ENCODE measurements at regions of chr12 and their contacts with region 1.

Region 1: DNA sequence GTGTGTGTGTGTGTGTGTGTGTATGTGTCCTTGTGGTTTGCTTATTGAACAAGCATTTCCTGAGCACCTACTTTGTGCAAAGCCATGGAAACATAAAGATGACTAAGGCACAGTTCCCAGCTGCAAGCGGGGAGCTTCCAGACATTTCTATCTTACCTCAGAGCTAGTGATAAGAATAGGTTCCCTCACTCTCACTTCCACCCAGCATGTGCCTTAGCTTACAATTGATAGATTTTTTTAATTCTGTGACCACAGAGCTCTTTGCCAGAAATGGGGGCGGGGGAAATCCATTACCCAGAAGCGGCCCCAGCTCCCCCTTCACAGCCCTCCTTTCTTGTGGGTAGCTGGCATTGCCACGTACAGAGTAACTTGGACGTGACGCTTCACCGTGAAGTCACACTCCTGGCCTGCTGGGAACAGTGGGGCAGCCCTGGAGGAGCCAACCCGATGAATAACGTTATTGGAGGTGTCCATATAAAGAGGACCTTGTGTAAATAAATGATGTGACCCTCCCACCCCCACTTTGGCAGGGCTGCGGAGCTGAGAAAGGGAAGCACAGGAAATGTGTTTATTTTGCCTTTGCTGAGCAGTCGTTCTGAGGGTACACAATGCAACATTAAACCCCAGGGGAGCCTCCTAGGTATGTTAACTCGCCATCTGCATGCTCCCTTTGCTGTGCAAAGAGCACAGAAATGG is 238.9 kb downstream of the CHST11 start:
- DNase-seq: peak; percentile 94
- H3K4me3 Mint-ChIP-seq: peak overlapping the region; percentile 16
- H3K27ac Mint-ChIP-seq: peak overlapping the region; percentile 92
- H3K4me1 Mint-ChIP-seq: peaks cover 74% of the 10 kb centered on the region
- H3K27me3 Mint-ChIP-seq: no peaks in the 10 kb centered on the region

Region 2: DNA sequence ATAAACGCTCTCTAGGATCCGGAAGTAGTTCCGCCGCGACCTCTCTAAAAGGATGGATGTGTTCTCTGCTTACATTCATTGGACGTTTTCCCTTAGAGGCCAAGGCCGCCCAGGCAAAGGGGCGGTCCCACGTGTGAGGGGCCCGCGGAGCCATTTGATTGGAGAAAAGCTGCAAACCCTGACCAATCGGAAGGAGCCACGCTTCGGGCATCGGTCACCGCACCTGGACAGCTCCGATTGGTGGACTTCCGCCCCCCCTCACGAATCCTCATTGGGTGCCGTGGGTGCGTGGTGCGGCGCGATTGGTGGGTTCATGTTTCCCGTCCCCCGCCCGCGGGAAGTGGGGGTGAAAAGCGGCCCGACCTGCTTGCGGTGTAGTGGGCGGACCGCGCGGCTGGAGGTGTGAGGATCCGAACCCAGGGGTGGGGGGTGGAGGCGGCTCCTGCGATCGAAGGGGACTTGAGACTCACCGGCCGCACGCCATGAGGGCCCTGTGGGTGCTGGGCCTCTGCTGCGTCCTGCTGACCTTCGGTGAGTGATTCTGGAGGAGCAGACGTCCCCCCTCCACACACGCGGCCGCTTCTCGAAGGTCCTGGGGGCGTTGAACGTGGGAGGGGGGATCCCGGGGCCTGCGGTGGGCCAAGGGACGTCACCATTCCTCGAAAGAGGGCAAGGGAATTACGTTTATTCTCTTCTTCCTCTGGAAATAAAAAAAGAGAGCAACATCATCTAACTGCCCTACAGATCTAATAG is 765.4 kb before region 1 on chr12 and contains the start of gene HSP90B1:
- CTCF ChIA-PET with region 1: no interaction called
- POLR2A ChIA-PET with region 1: no interaction called
- intact Hi-C with region 1: loop called (anchors 10 kb)
- DNase-seq: peak; percentile 100
- H3K4me3 Mint-ChIP-seq: peak within 1 kb of the TSS; percentile 86
- H3K27ac Mint-ChIP-seq: peak within 1 kb of the TSS; percentile 97
- H3K4me1 Mint-ChIP-seq: peaks cover 60% of the 10 kb centered on the region
- H3K27me3 Mint-ChIP-seq: no peaks in the 10 kb centered on the region
- total RNA-seq, gene HSP90B1: 452 to 453 TPM

Region 3: DNA sequence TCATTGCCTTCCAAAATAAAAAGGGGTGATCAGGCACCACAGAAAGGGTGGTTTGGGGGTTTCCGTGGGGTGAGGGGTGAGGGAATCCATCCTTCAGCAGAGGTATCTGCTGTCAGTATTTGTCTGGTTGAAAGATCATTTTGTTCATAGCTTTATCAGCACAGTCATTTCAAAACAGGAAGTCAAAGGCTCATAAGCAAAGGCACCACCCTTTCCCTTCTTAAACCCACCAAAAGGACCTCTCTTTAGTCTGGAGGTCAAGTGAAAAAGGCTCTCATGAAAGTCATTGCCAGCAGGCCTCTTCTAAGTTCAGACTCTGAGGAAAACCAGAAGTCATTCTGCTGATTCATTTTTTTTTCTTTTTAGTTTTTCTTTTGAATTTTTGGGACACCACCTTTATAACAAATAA is 232.7 kb before region 1 on chr12:
- CTCF ChIA-PET with region 1: interaction called, 5 read pairs
- POLR2A ChIA-PET with region 1: interaction called, 4 read pairs
- intact Hi-C with region 1: loop called (anchors 1 kb)
- DNase-seq: peak; percentile 65
- H3K4me3 Mint-ChIP-seq: peak overlapping the region; percentile 67
- H3K27ac Mint-ChIP-seq: peak overlapping the region; percentile 98
- H3K4me1 Mint-ChIP-seq: peaks cover 76% of the 10 kb centered on the region
- H3K27me3 Mint-ChIP-seq: no peaks in the 10 kb centered on the region

Region 4: DNA sequence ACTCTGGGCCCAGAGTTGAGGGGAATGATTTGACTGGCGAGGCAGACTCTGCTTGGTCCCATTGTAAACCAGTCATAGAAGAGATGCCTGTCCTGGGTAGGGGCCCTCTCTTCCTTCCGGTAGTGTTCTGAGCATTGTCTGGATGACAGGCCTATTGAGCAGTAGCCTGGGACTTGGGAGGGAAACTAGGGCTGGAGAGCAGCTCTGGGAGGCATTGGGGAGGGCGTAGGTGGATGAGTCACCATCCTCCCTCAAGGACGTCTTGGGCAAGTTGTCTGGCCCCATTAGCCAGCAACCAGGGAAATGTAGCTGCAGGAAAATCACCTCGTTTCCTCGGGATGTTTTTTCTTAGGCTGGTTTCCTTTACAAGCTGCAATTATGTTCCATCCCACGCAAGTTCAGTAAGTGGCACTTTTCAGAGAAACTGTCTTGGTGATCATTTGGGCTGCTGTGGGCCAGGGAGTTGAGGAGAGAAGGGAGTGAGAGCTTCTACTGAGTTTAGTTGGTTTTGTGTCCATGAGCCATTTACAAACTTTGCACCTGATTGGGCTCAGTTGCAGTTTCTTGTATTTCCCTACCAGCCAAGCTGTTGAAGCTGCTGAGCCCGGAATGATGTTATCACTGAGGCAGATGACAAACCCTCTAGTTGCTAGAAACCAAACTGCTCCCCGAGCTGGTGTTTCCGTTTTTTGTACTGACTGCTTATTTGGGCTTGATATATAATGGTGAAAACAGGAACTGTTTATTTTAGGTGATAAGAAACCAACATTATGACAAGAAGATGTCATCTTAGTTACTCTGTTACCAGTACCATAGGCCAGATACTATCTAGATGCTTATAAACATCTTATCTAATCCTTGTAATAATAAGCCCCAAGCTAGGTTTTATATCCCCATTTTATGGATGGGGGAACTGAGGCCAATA is 91.3 kb before region 1 on chr12:
- CTCF ChIA-PET with region 1: no interaction called
- POLR2A ChIA-PET with region 1: interaction called, 4 read pairs
- intact Hi-C with region 1: loop called (anchors 1 kb)
- DNase-seq: peak; percentile 81
- H3K4me3 Mint-ChIP-seq: peak overlapping the region; percentile 19
- H3K27ac Mint-ChIP-seq: peak overlapping the region; percentile 92
- H3K4me1 Mint-ChIP-seq: peaks cover 47% of the 10 kb centered on the region
- H3K27me3 Mint-ChIP-seq: no peaks in the 10 kb centered on the region

Region 5: GRCh38 chr12:104653730-104654664 is 41.6 kb before region 1 on chr12:
- CTCF ChIA-PET with region 1: no interaction called
- POLR2A ChIA-PET with region 1: no interaction called
- intact Hi-C with region 1: no loop called
- DNase-seq: peak; percentile 20
- H3K4me3 Mint-ChIP-seq: no peak overlapping the region
- H3K27ac Mint-ChIP-seq: no peak overlapping the region
- H3K4me1 Mint-ChIP-seq: peaks cover 18% of the 10 kb centered on the region
- H3K27me3 Mint-ChIP-seq: no peaks in the 10 kb centered on the region

Region 6: DNA sequence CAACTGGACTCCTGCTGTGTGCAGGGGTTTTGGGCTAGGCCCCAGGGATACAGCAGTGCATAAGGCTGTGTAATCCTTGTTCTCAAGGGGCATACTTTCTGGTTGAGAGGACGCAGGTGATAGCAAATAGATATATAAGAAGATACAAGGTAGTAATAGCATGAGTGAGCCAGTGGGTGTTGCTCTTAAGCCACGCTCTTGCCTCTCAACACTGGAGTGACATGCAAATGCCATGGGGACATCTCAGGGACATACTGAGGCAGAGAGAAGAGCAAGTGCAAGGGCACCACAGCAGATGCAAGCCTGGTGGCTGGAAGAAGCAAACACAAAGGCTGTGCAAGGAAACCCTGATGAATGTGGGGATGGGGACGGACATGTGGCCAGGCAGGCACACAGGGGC is 15.5 kb before region 1 on chr12:
- CTCF ChIA-PET with region 1: interaction called, 4 read pairs
- POLR2A ChIA-PET with region 1: interaction called, 7 read pairs
- intact Hi-C with region 1: loop called (anchors 1 kb)
- DNase-seq: peak; percentile 58
- H3K4me3 Mint-ChIP-seq: no peak overlapping the region
- H3K27ac Mint-ChIP-seq: peak overlapping the region; percentile 75
- H3K4me1 Mint-ChIP-seq: peaks cover 74% of the 10 kb centered on the region
- H3K27me3 Mint-ChIP-seq: no peaks in the 10 kb centered on the region

Region 7: GRCh38 chr12:104930388-104931326 is 235.1 kb after region 1 on chr12:
- CTCF ChIA-PET with region 1: no interaction called
- POLR2A ChIA-PET with region 1: no interaction called
- intact Hi-C with region 1: loop called (anchors 1 kb)
- DNase-seq: peak; percentile 73
- H3K4me3 Mint-ChIP-seq: no peak overlapping the region
- H3K27ac Mint-ChIP-seq: peak overlapping the region; percentile 39
- H3K4me1 Mint-ChIP-seq: peaks cover 25% of the 10 kb centered on the region
- H3K27me3 Mint-ChIP-seq: no peaks in the 10 kb centered on the region

Measured in activated CD4-positive, alpha-beta memory T cell treated with anti-CD3 and anti-CD28 coated beads for 36 hours (primary cell).